ENCODE measurements at regions of chr3 and their contacts with region 1.

Region 1: GRCh38 chr3:16290007-16290826 is 25.2 kb downstream of the OXNAD1 start:
- DNase-seq: peak; percentile 45 to 67
- H3K4me3 ChIP-seq: no peak overlapping the region
- H3K27ac ChIP-seq: peak overlapping the region in 1 of 2 donors; percentile 13
- H3K4me1 ChIP-seq: no peaks in the 10 kb centered on the region
- H3K27me3 ChIP-seq: no peaks in the 10 kb centered on the region
- CTCF ChIP-seq: peak; percentile 79 to 88 (median 82)
- POLR2A ChIP-seq: no peak

Region 2: DNA sequence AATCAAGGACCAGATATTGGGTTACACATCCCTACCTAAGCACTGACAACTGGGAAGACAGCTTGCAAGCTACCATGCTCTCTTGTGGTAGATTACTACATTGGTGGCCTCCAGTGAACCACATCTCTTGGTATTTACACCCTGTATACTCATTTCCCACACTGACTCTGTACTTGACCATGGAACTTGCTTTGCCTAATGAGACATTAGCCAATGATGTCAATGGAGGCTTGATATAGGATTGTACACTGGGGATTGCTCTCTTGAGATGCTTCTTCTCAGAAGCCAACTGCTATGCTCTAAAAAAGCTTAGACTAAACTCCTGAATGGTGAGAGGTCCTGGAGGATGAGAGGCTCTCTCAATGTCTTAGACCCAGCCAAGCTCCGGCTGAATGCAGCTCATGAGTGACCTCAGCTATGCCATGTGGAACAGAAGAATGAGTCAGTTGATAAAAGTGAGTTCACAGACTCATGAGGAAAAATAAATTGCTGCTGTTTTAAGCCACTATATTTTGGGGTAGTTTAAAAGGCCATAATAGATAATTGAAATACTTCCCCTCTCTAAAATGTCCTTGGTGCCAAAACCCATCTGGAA is 177.2 kb before region 1 on chr3:
- intact Hi-C with region 1: no loop called
- DNase-seq: no peak
- H3K4me3 ChIP-seq: no peak overlapping the region
- H3K27ac ChIP-seq: peak overlapping the region in 1 of 2 donors; percentile 35
- H3K4me1 ChIP-seq: no peaks in the 10 kb centered on the region
- H3K27me3 ChIP-seq: no peaks in the 10 kb centered on the region
- CTCF ChIP-seq: no peak
- POLR2A ChIP-seq: no peak

Region 3: DNA sequence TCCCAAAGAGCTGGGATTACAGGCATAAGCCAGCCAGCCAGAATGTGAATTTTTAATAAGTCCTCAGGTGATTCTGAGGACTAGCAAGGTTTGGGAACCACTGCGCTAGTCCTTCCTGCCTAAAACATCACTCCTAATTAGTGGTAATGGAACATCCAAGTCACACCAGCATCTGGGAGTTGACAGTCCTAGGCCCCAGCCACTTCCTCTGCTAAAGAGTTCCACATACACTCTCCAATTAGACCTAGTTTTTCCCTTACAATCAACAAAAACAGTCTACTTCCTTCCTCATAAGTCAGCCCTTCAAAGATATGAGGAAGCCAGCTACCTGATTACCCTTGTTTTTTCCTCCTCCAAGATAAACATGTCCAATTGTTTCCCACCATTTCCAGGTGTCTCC is 52.9 kb after region 1 on chr3:
- intact Hi-C with region 1: no loop called
- DNase-seq: no peak
- H3K4me3 ChIP-seq: no peak overlapping the region
- H3K27ac ChIP-seq: no peak overlapping the region
- H3K4me1 ChIP-seq: no peaks in the 10 kb centered on the region
- H3K27me3 ChIP-seq: no peaks in the 10 kb centered on the region
- CTCF ChIP-seq: no peak
- POLR2A ChIP-seq: no peak

Region 4: DNA sequence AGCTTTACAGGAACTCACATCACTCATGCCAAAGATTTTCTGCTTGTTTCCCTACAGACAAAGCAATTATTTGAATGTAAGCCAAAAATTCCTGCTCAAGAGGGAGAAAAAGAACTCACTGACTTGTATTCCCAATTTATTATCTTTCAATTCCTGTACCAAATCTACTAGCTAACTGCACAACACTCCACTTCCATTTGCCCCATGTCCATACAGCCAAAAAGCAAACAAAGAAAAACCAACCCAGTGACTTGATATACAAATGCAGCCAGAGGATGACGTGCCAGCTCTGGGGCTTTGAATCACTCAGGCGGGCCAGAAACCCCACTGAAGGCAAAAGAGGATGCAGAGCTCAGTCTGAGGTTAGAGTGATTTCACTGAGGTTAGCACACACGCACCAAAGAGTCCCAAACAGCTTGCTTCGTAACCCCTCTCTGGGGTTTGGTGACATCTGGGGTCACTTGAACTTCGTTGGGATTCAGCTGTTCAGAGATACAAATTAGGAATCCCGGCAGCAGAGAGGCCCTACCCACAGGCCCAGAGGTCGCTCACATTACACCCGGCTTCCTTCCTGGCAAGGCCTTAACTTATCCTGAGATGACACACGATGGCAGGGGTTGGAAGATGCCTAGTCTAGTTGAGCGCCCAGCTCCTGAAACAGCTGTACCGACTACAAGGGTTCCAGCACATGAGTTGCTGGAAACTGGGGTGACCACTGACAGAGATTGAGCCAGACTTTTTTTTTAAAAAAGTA is 221.6 kb after region 1 on chr3:
- intact Hi-C with region 1: loop called (anchors 10 kb)
- DNase-seq: peak; percentile 38 to 63
- H3K4me3 ChIP-seq: peak overlapping the region; percentile 73 to 92
- H3K27ac ChIP-seq: peak overlapping the region; percentile 78 to 85
- H3K4me1 ChIP-seq: peaks cover 5 to 7% of the 10 kb centered on the region in 2 donors
- H3K27me3 ChIP-seq: no peaks in the 10 kb centered on the region
- CTCF ChIP-seq: no peak
- POLR2A ChIP-seq: no peak

Region 5: DNA sequence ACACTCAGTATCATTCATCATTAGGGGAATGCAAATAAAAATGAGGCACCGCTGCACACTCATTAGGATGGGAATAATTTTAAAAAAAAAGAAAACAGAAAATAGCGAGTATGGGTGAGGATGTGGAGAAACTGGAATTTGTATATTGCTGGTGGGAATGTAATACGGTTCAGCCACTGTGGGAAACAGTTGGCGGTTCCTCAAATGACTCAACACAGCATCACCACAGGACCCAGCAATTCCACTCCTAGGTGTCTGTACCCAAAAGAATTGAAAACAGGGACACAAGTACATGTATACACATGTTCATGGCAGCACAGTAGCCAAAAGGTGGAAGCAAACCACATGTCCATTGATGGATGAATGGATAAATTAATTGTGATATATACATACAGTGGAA is 258.5 kb after region 1 on chr3:
- intact Hi-C with region 1: loop called (anchors 10 kb)
- DNase-seq: no peak
- H3K4me3 ChIP-seq: no peak overlapping the region
- H3K27ac ChIP-seq: no peak overlapping the region
- H3K4me1 ChIP-seq: no peaks in the 10 kb centered on the region
- H3K27me3 ChIP-seq: no peaks in the 10 kb centered on the region
- CTCF ChIP-seq: no peak
- POLR2A ChIP-seq: no peak

Measured in uterus (tissue), 4 donors.